ENCODE measurements at regions of chr10 and their contacts with region 1.

Region 1: GRCh38 chr10:7507887-7508726 is 97.3 kb upstream of the SFMBT2 start:
- DNase-seq: peak in 6 of 10 donors; percentile 10 to 51 (median 32)
- ATAC-seq: peak; percentile 65 to 79
- H3K4me3 Mint-ChIP-seq: peak overlapping the region in 9 of 10 donors; percentile 39 to 83 (median 75)
- H3K27ac Mint-ChIP-seq: peak overlapping the region; percentile 85 to 97 (median 92)
- H3K4me1 Mint-ChIP-seq: peaks cover 40 to 67% (median 58%) of the 10 kb centered on the region in 4 donors
- H3K27me3 Mint-ChIP-seq: no peaks in the 10 kb centered on the region

Region 2: GRCh38 chr10:7397049-7398035 is 110.8 kb before region 1 on chr10:
- POLR2A ChIA-PET with region 1: no interaction called
- DNase-seq: no peak
- ATAC-seq: no peak
- H3K4me3 Mint-ChIP-seq: no peak overlapping the region
- H3K27ac Mint-ChIP-seq: peak overlapping the region in 3 of 10 donors; percentile 12 to 79 (median 17)
- H3K4me1 Mint-ChIP-seq: peaks cover 42 to 84% (median 81%) of the 10 kb centered on the region in 4 donors
- H3K27me3 Mint-ChIP-seq: no peaks in the 10 kb centered on the region

Region 3: GRCh38 chr10:7484456-7485243 is 23.5 kb before region 1 on chr10:
- POLR2A ChIA-PET with region 1: interaction called, 17 read pairs
- DNase-seq: peak; percentile 17 to 88 (median 66)
- ATAC-seq: peak; percentile 88 to 90
- H3K4me3 Mint-ChIP-seq: peak overlapping the region; percentile 53 to 85 (median 79)
- H3K27ac Mint-ChIP-seq: peak overlapping the region; percentile 82 to 100 (median 96)
- H3K4me1 Mint-ChIP-seq: peaks cover 50 to 92% (median 88%) of the 10 kb centered on the region in 4 donors
- H3K27me3 Mint-ChIP-seq: no peaks in the 10 kb centered on the region

Region 4: DNA sequence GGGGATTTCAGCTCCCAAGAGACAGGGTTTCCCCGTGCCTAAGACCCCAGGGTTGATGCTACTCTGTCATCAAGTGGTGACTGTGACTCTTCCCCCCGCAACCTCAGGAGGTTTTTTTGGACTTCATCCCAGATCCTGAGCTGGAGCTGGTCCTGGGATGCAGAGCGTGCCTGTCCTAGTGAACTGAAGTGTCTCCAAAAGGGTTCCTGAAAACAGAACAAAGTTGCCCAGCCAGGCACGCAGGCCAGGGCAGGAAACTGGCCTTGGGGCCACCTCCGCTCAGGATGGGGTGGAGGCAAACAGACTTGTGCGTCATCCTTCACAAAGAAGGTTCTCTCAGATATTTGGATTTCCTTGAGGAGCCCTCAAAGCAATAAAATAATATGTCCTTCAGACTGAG is 39.7 kb after region 1 on chr10:
- POLR2A ChIA-PET with region 1: no interaction called
- DNase-seq: no peak
- ATAC-seq: no peak
- H3K4me3 Mint-ChIP-seq: no peak overlapping the region
- H3K27ac Mint-ChIP-seq: no peak overlapping the region
- H3K4me1 Mint-ChIP-seq: no peaks in the 10 kb centered on the region
- H3K27me3 Mint-ChIP-seq: peaks cover 0 to 3% (median 0%) of the 10 kb centered on the region in 5 donors